ENCODE measurements at regions of chr3 and their contacts with region 1.

Region 1: GRCh38 chr3:101779047-101779821 is at the start of gene NXPE3:
- DNase-seq: peak; percentile 93 to 98 (median 97)
- H3K4me3 ChIP-seq: peak within 1 kb of the TSS; percentile 62 to 98 (median 92)
- H3K27ac ChIP-seq: peak within 1 kb of the TSS; percentile 60 to 98 (median 93)
- H3K27me3 ChIP-seq: no peaks in the 10 kb centered on the region
- CTCF ChIP-seq: peak in 30 of 56 donors; percentile 7 to 48 (median 21)
- total RNA-seq, gene NXPE3: 30.4 to 103 (median 51.4) TPM

Region 2: GRCh38 chr3:101695779-101696372 is 83.4 kb before region 1 on chr3:
- intact Hi-C with region 1: loop called in 1 of 2 experiments (anchors 5 kb)
- DNase-seq: peak in 2 of 10 donors; percentile 30 to 57
- H3K4me3 ChIP-seq: peak overlapping the region in 3 of 59 donors; percentile 8 to 14 (median 14)
- H3K27ac ChIP-seq: peak overlapping the region in 27 of 59 donors; percentile 5 to 75 (median 52)
- H3K27me3 ChIP-seq: no peaks in the 10 kb centered on the region
- CTCF ChIP-seq: peak; percentile 72 to 94 (median 84)

Region 3: DNA sequence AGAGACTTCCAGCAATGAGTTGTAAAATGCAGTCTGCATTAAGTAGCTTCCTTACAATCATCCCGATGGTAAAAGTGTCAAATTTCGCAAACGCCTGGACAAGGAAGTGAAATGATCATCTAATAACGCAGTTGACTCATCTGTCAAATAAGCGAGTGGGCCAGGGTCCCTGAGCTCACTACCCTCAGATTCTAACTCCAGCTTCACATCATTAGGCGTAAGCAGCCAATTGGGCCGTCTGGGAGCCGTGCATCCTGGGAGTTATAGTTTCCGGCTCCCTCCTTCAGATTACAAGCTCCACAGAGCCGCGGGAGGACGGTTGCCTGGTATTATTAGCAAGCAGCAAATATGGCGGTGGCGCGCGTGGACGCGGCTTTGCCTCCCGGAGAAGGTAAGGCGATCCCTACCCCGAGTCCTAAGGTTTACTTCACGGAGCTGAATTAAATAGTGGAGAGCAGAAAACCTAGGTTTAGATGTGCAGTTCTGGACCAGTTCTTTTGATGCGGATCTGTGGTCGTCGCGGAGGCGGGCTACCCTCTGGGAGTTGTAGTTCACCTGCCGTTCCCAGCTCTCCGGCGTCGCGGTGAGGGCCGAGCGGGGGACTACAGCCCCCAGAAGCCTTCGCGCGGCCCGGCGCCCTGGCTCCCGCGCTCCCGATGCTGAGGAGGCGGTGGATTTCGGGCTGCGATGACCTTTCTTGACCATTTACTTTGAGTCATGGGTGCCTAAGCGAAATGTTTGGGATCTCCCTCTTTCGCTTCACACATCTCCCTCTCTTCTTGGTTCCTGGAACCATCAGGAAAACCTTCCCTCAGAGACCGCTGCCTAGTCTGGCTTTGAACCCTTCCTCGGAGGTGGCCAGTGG is 54.7 kb before region 1 on chr3 and contains the start of gene CEP97:
- intact Hi-C with region 1: loop called (anchors 2 kb)
- DNase-seq: peak; percentile 86 to 98 (median 94)
- H3K4me3 ChIP-seq: peak within 1 kb of the TSS; percentile 67 to 100 (median 88)
- H3K27ac ChIP-seq: peak within 1 kb of the TSS; percentile 12 to 100 (median 95)
- H3K27me3 ChIP-seq: no peaks in the 10 kb centered on the region
- CTCF ChIP-seq: peak in 29 of 56 donors; percentile 4 to 54 (median 23)
- total RNA-seq, gene CEP97: 19.1 to 55.5 (median 35.0) TPM

Region 4: GRCh38 chr3:101732240-101732641 is 47.0 kb before region 1 on chr3:
- intact Hi-C with region 1: loop called in 1 of 2 experiments (anchors 2 kb)
- DNase-seq: peak in 3 of 10 donors; percentile 24 to 63 (median 46)
- H3K4me3 ChIP-seq: peak overlapping the region in 7 of 59 donors; percentile 1 to 30 (median 12)
- H3K27ac ChIP-seq: peak overlapping the region; percentile 12 to 100 (median 95)
- H3K27me3 ChIP-seq: no peaks in the 10 kb centered on the region
- CTCF ChIP-seq: peak in 5 of 56 donors; percentile 12 to 27 (median 16)

Region 5: DNA sequence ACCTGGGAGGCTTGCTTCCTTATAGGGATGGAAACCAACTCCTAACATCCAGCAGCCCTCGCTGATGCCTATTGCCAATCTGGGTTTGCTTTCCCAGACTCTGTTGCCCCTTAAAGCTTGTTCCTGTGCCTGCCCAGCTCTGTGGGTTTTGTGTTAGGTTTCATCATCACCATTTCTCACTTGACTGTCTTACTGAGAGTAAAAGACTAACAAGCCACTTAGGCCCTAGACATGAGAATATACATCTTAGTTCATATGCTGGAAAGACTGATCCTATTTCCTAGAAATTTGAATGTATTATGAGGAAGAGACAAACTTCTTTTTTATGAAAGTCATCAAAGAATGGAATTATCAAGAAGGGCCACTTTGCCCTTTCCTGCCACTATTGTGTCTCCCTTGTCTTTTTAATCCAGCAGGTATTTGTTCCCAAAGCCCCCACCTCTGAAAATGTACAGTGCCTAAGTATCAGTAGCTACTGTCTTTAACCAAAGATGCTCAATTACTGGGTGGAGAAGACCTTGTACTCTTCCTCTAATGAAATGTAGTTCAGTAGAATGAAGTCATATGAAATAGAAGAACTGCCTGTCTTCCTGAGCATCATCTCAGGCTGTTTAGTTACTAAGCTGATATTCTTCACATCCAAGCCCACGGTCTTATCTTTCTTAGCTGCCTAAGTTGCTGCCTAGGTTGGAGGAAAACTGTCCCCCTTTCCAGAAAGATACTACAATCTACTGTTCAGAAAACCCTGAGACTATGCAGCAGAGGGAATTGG is 595.8 kb after region 1 on chr3:
- intact Hi-C with region 1: no loop called
- DNase-seq: no peak
- H3K4me3 ChIP-seq: no peak overlapping the region
- H3K27ac ChIP-seq: no peak overlapping the region
- H3K27me3 ChIP-seq: peaks cover 0 to 5% (median 0%) of the 10 kb centered on the region in 45 donors
- CTCF ChIP-seq: no peak